PC-3 (cell line): ENCODE measurements at regions of chr18 and their contacts with region 1.

Region 1: GRCh38 chr18:31101183-31102024 is 817 bp downstream of the DSC2 start:
- DNase-seq: peak; percentile 23
- ATAC-seq: peak; percentile 7
- H3K4me3 ChIP-seq: peak overlapping the region; percentile 72
- H3K27ac ChIP-seq: peak overlapping the region; percentile 86
- H3K4me1 ChIP-seq: peaks cover 65% of the 10 kb centered on the region
- H3K27me3 ChIP-seq: no peaks in the 10 kb centered on the region
- CTCF ChIP-seq: 0 out of 2 replicates have a peak, but pooled peaks have one; percentile 25

Region 2: DNA sequence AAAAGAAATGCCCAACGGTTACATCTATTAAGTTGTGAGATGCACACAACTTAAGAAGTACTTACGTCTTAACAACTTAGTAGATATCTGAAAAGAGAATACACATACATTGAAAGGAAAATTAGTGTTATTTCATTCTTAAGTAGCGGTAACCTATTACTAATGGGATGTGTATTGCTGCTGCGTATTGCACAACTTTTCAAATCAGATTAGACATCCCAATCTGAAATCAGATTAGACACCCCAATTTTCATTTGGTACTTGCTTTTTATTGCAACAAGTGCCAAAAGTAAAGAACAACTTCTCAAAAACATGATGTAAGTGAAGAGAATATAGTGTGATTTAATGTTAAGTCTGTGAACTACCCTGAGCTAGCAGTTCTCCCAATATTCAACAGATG is 214.4 kb before region 1 on chr18:
- CTCF ChIA-PET with region 1: no interaction called
- POLR2A ChIA-PET with region 1: no interaction called
- intact Hi-C with region 1: no loop called
- DNase-seq: no peak
- ATAC-seq: no peak
- H3K4me3 ChIP-seq: no peak overlapping the region
- H3K27ac ChIP-seq: no peak overlapping the region
- H3K4me1 ChIP-seq: 0 out of 2 replicates have a peak, but pooled peaks cover 4% of the 10 kb centered on the region
- H3K27me3 ChIP-seq: peaks cover 26% of the 10 kb centered on the region; the same call in 1 of the 2 replicates
- CTCF ChIP-seq: no peak

Region 3: DNA sequence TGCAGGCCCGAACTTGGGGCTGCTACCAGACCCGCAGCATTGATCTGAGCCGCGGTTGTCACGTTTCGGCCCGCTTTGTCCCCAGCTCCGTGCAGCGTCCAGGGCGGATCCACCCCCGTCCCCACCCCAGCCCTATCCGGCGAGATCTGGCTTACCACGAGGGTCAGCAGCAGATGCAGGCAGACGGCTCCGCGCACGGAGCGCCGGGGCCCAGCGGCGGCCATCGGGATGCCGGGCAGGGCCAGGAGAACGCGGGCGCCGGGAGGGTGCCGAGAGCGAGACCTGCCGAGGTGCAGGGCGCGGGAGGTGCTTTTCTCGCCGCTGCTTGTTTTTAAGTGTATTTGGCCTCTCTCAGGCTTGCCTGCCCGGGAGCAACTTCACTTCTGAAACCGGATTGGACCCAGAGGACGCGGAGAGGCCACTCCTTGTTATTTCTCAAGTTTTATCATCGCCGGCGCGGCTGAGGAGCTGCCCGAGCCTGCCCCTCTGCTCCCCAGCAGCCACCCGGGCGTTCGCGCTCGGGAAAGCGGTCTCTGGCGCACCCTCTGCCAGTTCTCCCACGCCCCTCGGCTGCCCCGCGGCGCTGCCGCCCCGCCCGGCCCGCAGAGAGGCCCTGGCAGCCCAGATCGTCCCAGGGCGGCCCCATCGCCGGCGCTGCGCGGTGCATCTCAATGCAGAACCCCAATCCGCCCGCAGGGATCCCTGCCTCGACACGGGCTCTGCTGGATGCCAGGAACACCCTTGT is 58.8 kb before region 1 on chr18 and contains the start of gene DSC3:
- CTCF ChIA-PET with region 1: interaction called, 3 read pairs
- POLR2A ChIA-PET with region 1: interaction called, 5 read pairs
- intact Hi-C with region 1: loop called (anchors 1 kb)
- DNase-seq: peak; percentile 61
- ATAC-seq: peak; percentile 51
- H3K4me3 ChIP-seq: peak within 1 kb of the TSS; percentile 77
- H3K27ac ChIP-seq: peak within 1 kb of the TSS; percentile 63
- H3K4me1 ChIP-seq: peaks cover 40% of the 10 kb centered on the region
- H3K27me3 ChIP-seq: no peaks in the 10 kb centered on the region
- CTCF ChIP-seq: no peak
- total RNA-seq, gene DSC3: 11.1 and 14.6 TPM in 2 replicates

Region 4: DNA sequence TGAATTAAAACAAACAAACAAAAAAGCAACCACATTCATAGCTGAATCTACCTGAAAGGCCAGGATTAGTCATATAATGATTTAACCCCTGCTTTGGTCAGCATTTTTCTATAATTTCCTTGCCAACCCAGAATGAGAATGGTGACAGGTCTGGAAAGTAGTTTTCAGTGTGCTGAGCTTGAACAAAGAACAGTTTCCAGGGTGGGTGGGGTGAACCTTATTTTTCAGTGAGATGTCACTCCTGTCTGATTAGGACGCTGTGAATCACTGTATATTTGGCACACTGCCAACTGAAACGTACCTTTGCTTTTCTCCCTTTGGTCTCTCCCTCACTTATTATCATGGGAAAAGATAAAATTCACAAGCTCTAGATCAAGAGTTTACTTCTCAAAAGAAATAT is 96.3 kb after region 1 on chr18:
- CTCF ChIA-PET with region 1: interaction called, 3 read pairs
- POLR2A ChIA-PET with region 1: interaction called, 3 read pairs
- intact Hi-C with region 1: loop called (anchors 2 kb)
- DNase-seq: peak; percentile 34
- ATAC-seq: no peak; the same call in 1 of the 2 replicates
- H3K4me3 ChIP-seq: no peak overlapping the region
- H3K27ac ChIP-seq: peak overlapping the region; percentile 23; the same call in 1 of the 2 replicates
- H3K4me1 ChIP-seq: peaks cover 27% of the 10 kb centered on the region
- H3K27me3 ChIP-seq: no peaks in the 10 kb centered on the region
- CTCF ChIP-seq: no peak

Region 5: GRCh38 chr18:31399306-31400032 is 298.1 kb after region 1 on chr18:
- CTCF ChIA-PET with region 1: no interaction called
- POLR2A ChIA-PET with region 1: no interaction called
- intact Hi-C with region 1: loop called (anchors 2 kb)
- DNase-seq: peak; percentile 65
- ATAC-seq: peak; percentile 73
- H3K4me3 ChIP-seq: no peak overlapping the region
- H3K27ac ChIP-seq: peak overlapping the region; percentile 62
- H3K4me1 ChIP-seq: peaks cover 28% of the 10 kb centered on the region
- H3K27me3 ChIP-seq: no peaks in the 10 kb centered on the region
- CTCF ChIP-seq: no peak